ENCODE measurements at regions of chr3 and their contacts with region 1.

Region 1: GRCh38 chr3:46629551-46630517 is 17.5 kb downstream of the FAM240A start:
- DNase-seq: peak; percentile 90
- ATAC-seq: peak; percentile 98
- H3K4me3 ChIP-seq: peak overlapping the region; percentile 30
- H3K27ac ChIP-seq: peak overlapping the region; percentile 69
- H3K4me1 ChIP-seq: peaks cover 13% of the 10 kb centered on the region
- H3K27me3 ChIP-seq: no peaks in the 10 kb centered on the region
- CTCF ChIP-seq: peak; percentile 97

Region 2: DNA sequence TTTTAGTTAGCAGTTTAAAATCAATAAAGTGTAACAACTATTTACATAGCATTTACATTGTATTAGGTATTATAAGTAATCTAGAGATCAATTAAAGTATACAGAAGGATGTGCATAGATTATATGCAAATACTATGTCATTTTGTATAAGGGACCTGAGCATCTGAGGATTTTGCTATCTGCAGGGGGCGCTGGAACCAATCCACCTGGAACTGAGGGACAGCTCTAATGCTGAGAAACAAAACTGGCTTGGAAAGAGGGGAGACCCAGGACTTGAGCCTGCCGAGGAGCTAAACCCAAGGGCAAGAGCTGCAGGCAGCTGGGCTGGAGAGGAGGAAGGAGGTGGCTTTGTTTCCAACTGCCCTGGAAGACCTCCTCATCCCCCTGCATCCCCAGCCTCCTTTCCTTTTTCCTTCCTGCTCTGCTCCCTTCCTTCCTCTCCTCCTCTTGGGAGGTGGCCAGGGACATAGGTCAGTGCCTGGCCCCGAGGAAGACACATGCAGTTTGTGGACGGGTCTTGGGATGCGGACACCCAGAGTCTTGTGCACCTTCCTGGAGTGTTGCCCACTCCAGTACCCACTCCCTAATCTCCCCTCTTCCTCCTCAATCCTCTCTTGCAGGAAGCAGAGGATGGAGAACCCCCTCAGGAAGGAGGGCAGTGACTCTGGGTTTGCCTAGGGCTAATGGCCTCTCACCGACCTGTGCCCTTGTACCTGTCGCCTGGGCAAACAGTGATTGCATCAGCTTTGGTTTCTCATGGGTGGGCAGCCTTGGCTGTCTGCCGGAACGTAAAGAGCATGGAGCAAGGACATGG is 132.9 kb before region 1 on chr3:
- intact Hi-C with region 1: loop called (anchors 10 kb)
- DNase-seq: no peak
- ATAC-seq: no peak
- H3K4me3 ChIP-seq: no peak overlapping the region
- H3K27ac ChIP-seq: no peak overlapping the region
- H3K4me1 ChIP-seq: peaks cover 4% of the 10 kb centered on the region
- H3K27me3 ChIP-seq: no peaks in the 10 kb centered on the region
- CTCF ChIP-seq: peak; percentile 35

Region 3: DNA sequence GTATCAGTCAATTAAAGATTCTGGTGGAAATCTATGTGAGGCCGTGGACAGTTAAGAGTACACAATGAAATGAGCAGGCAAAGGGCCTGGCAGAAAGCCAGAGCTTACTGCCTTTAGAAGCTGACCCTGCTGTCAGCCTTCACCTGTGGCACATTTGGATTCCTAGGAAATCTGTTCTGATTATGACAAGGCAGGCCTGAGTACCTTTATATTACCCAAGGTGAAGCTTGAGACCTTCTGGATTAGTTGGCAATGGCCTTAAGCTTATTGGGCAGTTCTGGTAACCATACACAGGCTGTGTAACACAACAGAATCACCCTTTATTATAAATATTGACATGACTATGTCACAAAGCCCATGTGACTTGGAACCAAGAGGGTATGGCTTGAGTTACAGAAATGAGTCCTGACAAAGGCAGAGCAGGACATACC is 392.8 kb after region 1 on chr3:
- intact Hi-C with region 1: no loop called
- DNase-seq: no peak
- ATAC-seq: no peak
- H3K4me3 ChIP-seq: no peak overlapping the region
- H3K27ac ChIP-seq: no peak overlapping the region
- H3K4me1 ChIP-seq: peaks cover 21% of the 10 kb centered on the region
- H3K27me3 ChIP-seq: no peaks in the 10 kb centered on the region
- CTCF ChIP-seq: no peak

Measured in upper lobe of right lung (tissue), 1 donor.